Aorta (tissue), 5 donors: ENCODE measurements at regions of chr9 and their contacts with region 1.

Region 1: GRCh38 chr9:21070171-21070571 is 7.6 kb downstream of the IFNB1 start:
- DNase-seq: peak in 1 of 2 donors; percentile 61
- ATAC-seq: peak; percentile 91
- H3K4me3 ChIP-seq: no peak overlapping the region
- H3K27ac ChIP-seq: peak overlapping the region in 1 of 2 donors; percentile 85
- H3K4me1 ChIP-seq: no peaks in the 10 kb centered on the region
- H3K27me3 ChIP-seq: no peaks in the 10 kb centered on the region

Region 2: GRCh38 chr9:20980832-20981455 is 89.2 kb before region 1 on chr9:
- intact Hi-C with region 1: no loop called
- DNase-seq: no peak
- ATAC-seq: peak; percentile 77
- H3K4me3 ChIP-seq: no peak overlapping the region
- H3K27ac ChIP-seq: peak overlapping the region; percentile 52 to 84
- H3K4me1 ChIP-seq: peaks cover 0 to 5% of the 10 kb centered on the region in 2 donors
- H3K27me3 ChIP-seq: no peaks in the 10 kb centered on the region

Region 3: DNA sequence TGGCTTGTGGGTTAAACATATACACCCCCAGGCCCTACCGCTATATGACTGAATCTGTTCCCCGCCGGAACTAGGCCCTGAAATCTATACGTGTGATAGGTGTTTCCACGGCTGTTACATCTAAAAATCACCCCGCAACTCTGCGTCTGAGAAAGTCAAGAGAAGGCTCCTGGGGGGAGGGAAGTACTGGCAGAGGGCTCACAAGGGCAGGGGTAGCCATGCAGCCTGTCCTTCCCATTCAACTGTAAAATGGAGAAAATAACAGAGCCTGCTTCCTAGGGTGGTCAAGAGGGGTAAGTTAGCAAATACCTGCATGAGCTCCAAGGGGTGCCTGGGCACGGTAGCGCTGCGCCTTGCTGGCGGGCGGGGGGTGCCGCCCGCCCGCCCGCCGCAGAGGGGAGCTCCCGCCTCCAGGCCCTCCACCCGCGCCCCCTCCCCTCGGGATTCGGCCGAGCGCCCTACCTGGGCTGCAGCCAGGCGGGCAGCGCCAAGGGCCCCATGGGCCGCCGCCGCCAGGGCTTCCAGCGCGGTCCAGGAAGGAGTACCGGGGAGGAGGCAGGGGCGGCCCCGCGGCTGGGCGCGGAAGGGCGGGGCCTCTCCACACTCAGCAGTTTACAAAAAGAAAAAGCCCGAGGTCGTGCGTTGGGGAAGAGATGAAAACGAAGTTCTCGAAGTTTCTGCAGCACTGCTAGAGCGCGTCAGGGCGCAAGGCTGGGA is 38.9 kb before region 1 on chr9 and contains the start of gene HACD4:
- intact Hi-C with region 1: loop called in 1 of 2 experiments (anchors 5 kb)
- DNase-seq: peak; percentile 80 to 85
- ATAC-seq: peak; percentile 91
- H3K4me3 ChIP-seq: peak within 1 kb of the TSS; percentile 15 to 21
- H3K27ac ChIP-seq: peak within 1 kb of the TSS; percentile 20 to 59
- H3K4me1 ChIP-seq: no peaks in the 10 kb centered on the region
- H3K27me3 ChIP-seq: no peaks in the 10 kb centered on the region
- total RNA-seq, gene HACD4: 3.2 to 6.8 TPM

Region 4: GRCh38 chr9:21549251-21549765 is 479.1 kb after region 1 on chr9:
- intact Hi-C with region 1: no loop called
- DNase-seq: peak in 1 of 2 donors; percentile 43
- ATAC-seq: peak; percentile 65
- H3K4me3 ChIP-seq: no peak overlapping the region
- H3K27ac ChIP-seq: no peak overlapping the region
- H3K4me1 ChIP-seq: peaks cover 0 to 4% of the 10 kb centered on the region in 2 donors
- H3K27me3 ChIP-seq: no peaks in the 10 kb centered on the region